ENCODE measurements at regions of chr2 and their contacts with region 1.

Region 1: GRCh38 chr2:113240150-113240862 is 38.4 kb downstream of the PAX8 start:
- DNase-seq: peak; percentile 83
- H3K4me3 Mint-ChIP-seq: peak overlapping the region; percentile 55
- H3K27ac Mint-ChIP-seq: peak overlapping the region; percentile 77
- H3K4me1 Mint-ChIP-seq: peaks cover 21% of the 10 kb centered on the region
- H3K27me3 Mint-ChIP-seq: no peaks in the 10 kb centered on the region
- CTCF ChIP-seq: no peak

Region 2: GRCh38 chr2:113198790-113199612 is 41.3 kb before region 1 on chr2:
- CTCF ChIA-PET with region 1: interaction called, 505 read pairs
- POLR2A ChIA-PET with region 1: interaction called, 75 read pairs
- intact Hi-C with region 1: loop called (anchors 2 kb)
- DNase-seq: peak; percentile 80
- H3K4me3 Mint-ChIP-seq: peak overlapping the region; percentile 76
- H3K27ac Mint-ChIP-seq: peak overlapping the region; percentile 85
- H3K4me1 Mint-ChIP-seq: peaks cover 3% of the 10 kb centered on the region
- H3K27me3 Mint-ChIP-seq: no peaks in the 10 kb centered on the region
- CTCF ChIP-seq: peak; percentile 94

Region 3: GRCh38 chr2:113211226-113212105 is 28.8 kb before region 1 on chr2:
- CTCF ChIA-PET with region 1: interaction called, 505 read pairs
- POLR2A ChIA-PET with region 1: interaction called, 64 read pairs
- intact Hi-C with region 1: no loop called
- DNase-seq: peak; percentile 78
- H3K4me3 Mint-ChIP-seq: no peak overlapping the region
- H3K27ac Mint-ChIP-seq: peak overlapping the region; percentile 92
- H3K4me1 Mint-ChIP-seq: peaks cover 30% of the 10 kb centered on the region
- H3K27me3 Mint-ChIP-seq: no peaks in the 10 kb centered on the region
- CTCF ChIP-seq: no peak

Region 4: GRCh38 chr2:113282747-113283533 is 42.6 kb after region 1 on chr2:
- CTCF ChIA-PET with region 1: no interaction called
- POLR2A ChIA-PET with region 1: interaction called, 10 read pairs
- intact Hi-C with region 1: loop called (anchors 1 kb)
- DNase-seq: peak; percentile 78
- H3K4me3 Mint-ChIP-seq: peak overlapping the region; percentile 33
- H3K27ac Mint-ChIP-seq: peak overlapping the region; percentile 84
- H3K4me1 Mint-ChIP-seq: peaks cover 42% of the 10 kb centered on the region
- H3K27me3 Mint-ChIP-seq: no peaks in the 10 kb centered on the region
- CTCF ChIP-seq: no peak

Region 5: DNA sequence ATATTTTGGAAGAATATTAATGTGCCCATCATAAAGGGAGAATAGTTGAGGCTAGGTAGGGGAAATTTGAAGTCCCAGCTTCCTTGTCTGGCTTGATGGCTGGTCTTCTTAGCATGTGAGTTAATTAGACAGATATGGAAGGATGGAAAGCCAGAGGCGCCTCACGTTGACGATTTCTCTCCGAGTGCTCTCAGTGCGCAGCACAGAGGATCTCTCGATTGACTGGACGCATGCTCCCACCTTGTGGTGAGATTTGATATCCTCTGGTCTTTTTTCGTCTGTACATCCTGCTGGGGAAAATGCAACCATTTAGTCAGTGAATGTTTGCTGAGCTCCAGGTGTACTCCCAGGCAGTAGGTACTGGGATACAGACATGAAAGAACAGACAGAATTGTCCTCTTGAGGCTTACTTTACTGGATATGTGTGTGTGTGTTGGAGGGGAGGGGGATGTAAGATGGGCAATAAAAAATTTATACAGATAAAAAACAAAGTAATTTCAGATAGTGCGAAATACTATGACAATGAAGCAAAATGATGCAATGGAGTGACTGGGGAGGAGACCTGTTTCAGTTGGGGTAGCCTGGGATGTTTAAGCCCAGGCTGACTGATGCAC is 130.3 kb after region 1 on chr2:
- CTCF ChIA-PET with region 1: interaction called, 143 read pairs
- POLR2A ChIA-PET with region 1: no interaction called
- intact Hi-C with region 1: no loop called
- DNase-seq: peak; percentile 80
- H3K4me3 Mint-ChIP-seq: no peak overlapping the region
- H3K27ac Mint-ChIP-seq: no peak overlapping the region
- H3K4me1 Mint-ChIP-seq: peaks cover 7% of the 10 kb centered on the region
- H3K27me3 Mint-ChIP-seq: no peaks in the 10 kb centered on the region
- CTCF ChIP-seq: peak; percentile 76

Measured in MCF 10A (cell line).